ENCODE measurements at regions of chr14 and their contacts with region 1.

Region 1: DNA sequence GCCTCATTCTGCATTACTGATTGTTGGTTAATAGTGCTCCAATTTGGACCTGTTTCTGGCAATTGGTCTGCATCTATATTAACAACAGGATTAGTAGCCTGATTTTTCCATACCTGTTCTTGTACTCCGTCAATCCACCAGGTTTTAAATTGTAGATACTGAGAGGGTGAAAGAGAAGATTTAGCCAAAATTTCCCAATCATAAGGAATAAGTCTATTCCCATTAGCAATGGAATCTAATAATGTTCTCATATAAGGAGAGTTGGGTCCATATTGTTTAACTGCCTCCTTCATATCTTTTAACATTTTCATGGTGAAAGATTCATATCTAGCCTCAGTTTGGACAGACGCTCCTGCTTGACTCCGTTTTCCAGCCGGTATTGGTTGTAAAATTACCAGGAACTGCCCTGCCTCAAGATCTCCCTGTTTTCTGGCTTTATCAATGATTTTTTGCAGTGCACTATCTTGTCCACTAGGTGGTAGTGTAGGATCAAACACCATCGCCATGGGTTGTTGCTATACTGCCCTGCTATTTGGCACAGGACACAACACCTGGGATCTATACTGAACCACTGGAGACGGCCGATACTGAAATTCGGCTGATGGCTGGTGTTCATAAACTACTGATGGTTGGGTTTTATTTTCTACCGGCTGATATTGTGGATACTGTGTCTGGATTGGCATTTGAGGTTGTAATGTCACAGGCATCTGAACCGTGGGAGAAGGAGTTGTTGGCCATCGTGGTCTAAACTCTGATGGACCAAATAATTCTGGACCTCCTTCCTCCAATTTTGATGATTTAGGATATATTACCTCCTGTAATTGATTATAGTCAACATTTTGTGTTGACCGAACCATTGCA is 25.2 kb downstream of the DHRS4L2 start:
- DNase-seq: peak in 1 of 10 donors; percentile 82

Region 2: GRCh38 chr14:24036169-24036962 is 22.5 kb after region 1 on chr14:
- intact Hi-C with region 1: loop called (anchors 1 kb)
- DNase-seq: peak; percentile 59 to 97 (median 78)

Region 3: DNA sequence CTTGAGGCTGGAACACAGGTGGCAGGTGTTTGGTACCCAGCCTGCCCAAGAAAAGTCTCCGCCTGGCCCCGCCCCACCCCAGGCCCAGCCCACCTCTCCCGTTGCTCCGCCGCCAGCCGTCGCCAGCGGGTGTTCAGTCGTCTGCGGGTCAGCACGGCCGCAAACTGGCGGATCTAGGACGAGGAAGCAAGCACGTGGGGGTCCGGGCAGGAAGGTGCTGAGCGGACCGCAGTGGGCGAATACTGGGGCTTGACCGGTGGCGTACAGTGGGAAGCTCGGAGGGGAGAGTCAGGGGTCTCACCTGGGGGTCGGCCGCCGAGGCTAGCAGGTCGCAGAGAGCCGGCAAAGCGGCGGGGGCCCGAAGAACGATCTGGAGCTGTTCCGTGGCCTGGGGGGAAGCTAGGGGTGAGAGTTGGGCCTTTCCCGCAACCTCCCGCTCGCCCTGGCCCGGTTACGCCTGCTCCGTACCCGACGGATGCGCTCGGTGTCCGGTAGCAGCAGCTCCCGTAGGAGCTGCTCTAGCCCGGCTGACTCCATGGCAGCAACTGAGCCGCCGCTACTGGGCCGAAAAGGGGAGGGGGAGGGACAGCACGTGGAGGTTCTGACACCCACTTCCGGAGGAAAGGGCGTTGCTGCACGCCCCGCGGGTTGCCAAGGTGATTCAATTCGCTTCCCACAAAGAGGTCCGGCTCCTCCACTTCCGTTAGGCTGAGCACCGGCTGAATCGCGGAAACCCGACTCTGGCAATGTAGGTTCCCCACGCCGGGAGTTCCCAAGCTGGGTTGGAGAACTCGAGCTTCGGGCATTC is 174.6 kb after region 1 on chr14 and contains the start of gene IPO4:
- intact Hi-C with region 1: no loop called
- DNase-seq: peak; percentile 93 to 99 (median 95)

Region 4: GRCh38 chr14:24630872-24631477 is 617.1 kb after region 1 on chr14:
- intact Hi-C with region 1: no loop called
- DNase-seq: peak in 1 of 10 donors; percentile 67

Measured in posterior cingulate gyrus (tissue), 11 donors.